Gastrocnemius medialis (tissue), 4 donors: ENCODE measurements at regions of chr7 and their contacts with region 1.

Region 1: GRCh38 chr7:76291343-76292212 is 10.9 kb upstream of the HSPB1 start:
- DNase-seq: peak; percentile 82 to 91
- ATAC-seq: peak; percentile 49 to 53
- H3K4me3 ChIP-seq: peak overlapping the region; percentile 33 to 49 (median 39)
- H3K27ac ChIP-seq: peak overlapping the region; percentile 99 to 100 (median 100)
- H3K4me1 ChIP-seq: peaks cover 40 to 45% of the 10 kb centered on the region in 2 donors
- H3K27me3 ChIP-seq: no peaks in the 10 kb centered on the region
- CTCF ChIP-seq: peak; percentile 95 to 99 (median 98)
- POLR2A ChIP-seq: peak; percentile 26 to 48

Region 2: DNA sequence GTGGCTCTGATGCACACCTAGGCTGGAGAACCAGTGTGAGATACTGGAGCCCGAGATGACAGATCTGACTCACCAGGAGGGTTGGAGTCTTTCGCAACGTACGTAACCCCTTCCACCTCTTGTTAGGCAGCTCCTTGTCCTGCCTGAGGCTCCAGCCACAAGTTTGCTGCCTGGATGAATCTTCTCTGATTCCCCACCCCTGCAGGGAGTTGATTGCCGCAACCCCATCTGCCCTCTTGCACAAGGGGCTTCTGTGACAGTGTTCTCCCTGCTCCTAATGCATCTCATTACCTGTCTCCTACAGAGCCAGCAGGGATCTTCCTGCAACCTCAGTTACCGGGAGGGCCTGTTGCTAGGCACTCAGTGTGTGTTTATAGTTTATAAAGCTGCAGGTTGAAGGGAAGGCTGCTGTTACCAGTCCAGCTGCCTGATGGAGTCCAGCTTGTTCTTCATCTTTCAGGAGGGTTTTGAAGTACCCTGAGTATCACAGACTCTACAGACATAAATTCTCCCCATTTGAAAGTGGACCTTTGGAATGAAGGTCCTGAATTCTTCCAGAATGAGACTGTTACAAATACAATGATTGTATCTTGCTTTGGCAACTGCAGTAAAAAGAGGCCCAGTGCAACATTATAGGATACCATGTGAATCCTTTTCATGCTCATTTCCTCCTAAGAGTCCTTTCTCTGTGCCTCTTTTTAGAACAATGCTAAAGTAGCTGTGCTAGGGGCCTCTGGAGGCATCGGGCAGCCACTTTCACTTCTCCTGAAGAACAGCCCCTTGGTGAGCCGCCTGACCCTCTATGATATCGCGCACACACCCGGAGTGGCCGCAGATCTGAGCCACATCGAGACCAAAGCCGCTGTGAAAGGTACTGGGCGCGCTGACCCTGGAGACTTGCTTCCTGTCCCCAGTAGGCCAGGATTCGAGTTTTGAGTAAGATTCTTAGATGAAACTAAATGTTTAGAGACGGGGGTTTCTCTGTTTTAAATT is 237.2 kb before region 1 on chr7:
- in situ Hi-C with region 1: no loop called
- intact Hi-C with region 1: loop called (anchors 5 kb)
- DNase-seq: peak; percentile 41 to 90
- ATAC-seq: peak; percentile 76 to 83
- H3K4me3 ChIP-seq: no peak overlapping the region
- H3K27ac ChIP-seq: peak overlapping the region; percentile 54 to 94 (median 78)
- H3K4me1 ChIP-seq: peaks cover 63 to 77% of the 10 kb centered on the region in 2 donors
- H3K27me3 ChIP-seq: no peaks in the 10 kb centered on the region
- CTCF ChIP-seq: no peak
- POLR2A ChIP-seq: no peak

Region 3: DNA sequence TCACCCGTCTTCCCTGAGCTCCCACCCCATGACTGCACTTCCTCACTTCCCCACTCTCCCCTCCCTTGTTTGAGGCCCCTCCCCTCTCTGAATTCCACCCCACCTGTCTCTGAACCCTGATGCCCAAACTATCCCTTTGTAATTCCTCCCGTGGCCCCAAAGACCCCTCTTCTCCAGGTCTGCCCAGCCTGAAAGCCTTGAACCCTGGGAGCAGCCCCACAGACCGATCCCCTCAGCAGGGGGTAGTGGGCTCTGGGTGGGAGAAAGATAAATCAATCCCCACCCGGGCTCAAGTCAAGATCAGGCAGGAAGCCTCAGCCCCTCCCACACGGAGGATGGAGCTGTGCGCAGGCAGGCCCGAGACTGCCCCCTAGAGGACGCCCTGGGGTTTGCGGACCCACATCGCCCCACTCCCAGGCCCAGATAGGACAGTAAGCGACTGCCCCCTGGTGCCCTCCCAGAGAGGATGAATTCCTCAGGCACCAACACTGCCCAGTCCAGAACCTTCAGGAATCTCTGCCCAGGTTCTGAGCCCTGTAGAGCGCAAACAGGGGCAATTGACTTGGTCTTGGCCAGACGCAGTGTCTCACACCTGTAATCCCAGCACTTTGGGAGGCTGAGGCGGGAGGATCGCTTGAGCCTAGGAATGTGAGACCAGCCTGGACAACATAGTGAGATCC is 22.6 kb after region 1 on chr7:
- in situ Hi-C with region 1: no loop called
- intact Hi-C with region 1: loop called (anchors 1 kb)
- DNase-seq: peak; percentile 94 to 95
- ATAC-seq: peak; percentile 62 to 64
- H3K4me3 ChIP-seq: no peak overlapping the region
- H3K27ac ChIP-seq: peak overlapping the region; percentile 70 to 85 (median 82)
- H3K4me1 ChIP-seq: peaks cover 29 to 33% of the 10 kb centered on the region in 2 donors
- H3K27me3 ChIP-seq: no peaks in the 10 kb centered on the region
- CTCF ChIP-seq: peak; percentile 100
- POLR2A ChIP-seq: no peak

Region 4: GRCh38 chr7:76346778-76347177 is 55.2 kb after region 1 on chr7:
- in situ Hi-C with region 1: no loop called
- intact Hi-C with region 1: no loop called
- DNase-seq: no peak
- ATAC-seq: no peak
- H3K4me3 ChIP-seq: no peak overlapping the region
- H3K27ac ChIP-seq: peak overlapping the region; percentile 96 to 100 (median 98)
- H3K4me1 ChIP-seq: peaks cover 66 to 76% of the 10 kb centered on the region in 2 donors
- H3K27me3 ChIP-seq: no peaks in the 10 kb centered on the region
- CTCF ChIP-seq: no peak
- POLR2A ChIP-seq: no peak

Region 5: DNA sequence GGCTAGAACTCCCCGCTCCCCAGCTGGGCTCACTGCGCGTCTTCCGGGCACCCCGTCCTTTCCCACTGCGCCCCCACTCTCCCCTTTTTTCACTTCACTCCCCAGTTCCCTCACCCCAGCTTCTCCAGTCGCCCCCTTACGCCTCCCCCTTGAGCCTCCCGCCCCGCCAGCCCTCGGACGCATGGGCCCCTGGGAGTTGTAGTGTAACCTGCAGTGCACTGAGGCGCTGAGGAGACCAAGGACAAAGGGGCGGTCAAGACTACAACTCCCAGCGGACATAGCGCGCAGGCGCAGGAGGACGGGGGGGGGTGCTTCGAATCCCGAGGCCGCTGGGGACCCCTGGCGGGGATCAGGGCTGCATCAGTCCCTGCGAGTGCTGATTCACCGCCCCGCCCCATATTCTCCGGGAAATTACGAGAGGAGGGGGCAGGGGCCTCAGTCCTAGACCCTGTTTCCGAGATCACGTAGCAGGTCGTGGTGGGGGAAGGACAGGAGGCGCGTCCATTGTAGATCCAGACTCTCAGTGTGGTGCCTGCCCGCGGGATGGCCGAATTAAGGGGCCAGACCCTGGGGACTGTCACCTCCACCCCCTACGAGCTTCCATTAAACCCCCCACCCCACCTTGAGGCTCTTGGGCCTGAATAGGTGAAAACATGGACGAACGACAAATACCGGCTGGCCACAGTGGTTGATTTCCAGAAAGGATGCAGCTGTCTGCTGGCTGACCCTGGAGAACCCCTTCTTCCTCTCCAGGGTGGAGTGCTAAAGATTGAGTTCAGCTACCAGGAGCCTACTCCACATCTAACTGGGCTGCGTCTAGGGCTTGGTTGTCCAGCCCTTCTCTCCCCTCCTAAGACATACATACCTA is 67.8 kb after region 1 on chr7:
- in situ Hi-C with region 1: no loop called
- intact Hi-C with region 1: loop called (anchors 1 kb)
- DNase-seq: peak; percentile 98 to 99
- ATAC-seq: peak; percentile 91 to 93
- H3K4me3 ChIP-seq: peak overlapping the region; percentile 81 to 97 (median 90)
- H3K27ac ChIP-seq: peak overlapping the region; percentile 96 to 100 (median 98)
- H3K4me1 ChIP-seq: peaks cover 41 to 43% of the 10 kb centered on the region in 2 donors
- H3K27me3 ChIP-seq: no peaks in the 10 kb centered on the region
- CTCF ChIP-seq: peak; percentile 69 to 91 (median 83)
- POLR2A ChIP-seq: no peak